G401 (cell line): ENCODE measurements at regions of chr14 and their contacts with region 1.

Region 1: GRCh38 chr14:24422261-24422660 is 7.2 kb downstream of the CBLN3 start:
- DNase-seq: no peak

Region 2: GRCh38 chr14:24146978-24147760 is 275.1 kb before region 1 on chr14 and contains the start of gene RNF31:
- in situ Hi-C with region 1: no loop called
- DNase-seq: peak; percentile 100
- total RNA-seq, gene RNF31: 51.9 and 89.7 TPM in 2 replicates

Region 3: DNA sequence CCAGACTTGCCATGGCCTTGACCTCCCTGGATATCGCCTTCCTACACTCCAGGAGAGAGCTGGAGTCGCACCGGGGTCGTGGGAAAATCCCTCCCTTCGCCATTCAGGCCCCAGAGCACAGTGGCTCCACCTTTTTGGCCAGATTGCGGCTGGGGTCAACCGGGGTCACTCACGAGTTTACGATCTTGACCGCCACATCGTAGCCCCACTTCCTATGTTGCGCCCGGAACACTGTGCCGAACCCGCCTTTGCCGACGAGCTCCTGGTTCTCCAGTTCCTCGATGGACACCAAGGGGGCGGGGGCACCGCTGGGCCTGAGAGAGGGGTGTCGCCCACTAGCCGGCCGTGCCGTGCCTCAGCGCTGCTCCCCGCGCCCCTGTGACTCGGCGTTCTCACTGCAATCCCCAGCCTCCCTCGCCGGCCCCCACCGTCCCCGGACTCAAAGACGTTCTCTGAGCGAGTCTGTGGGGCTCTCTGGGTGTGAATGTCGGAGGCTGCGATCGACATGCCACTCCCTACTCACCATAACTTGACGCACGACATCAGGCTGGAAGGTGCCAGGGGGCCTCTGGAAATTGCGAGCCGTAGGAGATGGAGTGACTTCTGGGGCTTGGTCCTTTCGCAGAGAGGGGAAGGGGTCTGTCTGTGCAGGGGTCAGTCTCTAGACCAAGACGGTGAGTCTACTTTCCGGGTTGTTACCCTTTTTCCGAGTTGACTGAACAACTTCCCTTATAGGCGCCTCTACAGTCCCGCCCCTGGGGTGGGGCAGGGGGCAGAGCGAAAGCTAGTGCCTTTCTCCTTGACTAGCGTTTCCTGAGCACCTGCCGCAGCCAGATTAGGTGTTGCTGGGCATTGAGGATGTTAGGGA is 82.7 kb before region 1 on chr14 and contains the start of gene RIPK3:
- in situ Hi-C with region 1: loop called (anchors 5 kb)
- DNase-seq: no peak
- total RNA-seq, gene RIPK3: not detected in 2 replicates

Region 4: DNA sequence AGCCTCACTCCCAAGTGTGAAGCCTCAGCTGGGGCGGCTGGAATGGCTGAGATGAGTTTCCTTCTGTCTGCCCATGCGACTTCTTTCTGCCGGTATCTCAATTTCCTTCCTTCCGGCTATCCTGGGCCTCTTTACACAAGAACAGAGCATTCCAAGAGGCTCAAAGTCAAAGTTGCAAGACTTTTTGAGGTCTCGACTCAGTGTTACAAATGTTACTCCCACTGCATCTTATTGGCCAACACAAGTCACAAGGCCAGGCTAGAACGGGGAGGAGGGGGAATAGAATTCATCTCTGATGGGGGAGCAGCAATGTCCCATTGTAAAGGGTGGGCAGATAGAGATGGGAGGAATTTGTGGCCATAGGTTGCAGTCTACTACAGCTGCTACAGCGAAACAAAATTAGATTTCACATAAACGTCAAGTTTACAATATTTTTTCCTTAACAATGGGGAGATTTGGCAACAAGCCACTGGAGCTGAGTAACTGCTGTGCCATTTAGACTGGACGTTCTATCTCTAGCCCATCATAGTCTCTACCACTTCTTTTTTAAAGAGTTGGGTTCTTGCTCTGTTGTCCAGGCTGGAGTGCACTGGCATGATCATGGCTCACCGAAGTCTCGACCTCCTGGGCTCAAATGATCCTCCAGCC is 32.9 kb before region 1 on chr14:
- in situ Hi-C with region 1: no loop called
- DNase-seq: no peak

Region 5: DNA sequence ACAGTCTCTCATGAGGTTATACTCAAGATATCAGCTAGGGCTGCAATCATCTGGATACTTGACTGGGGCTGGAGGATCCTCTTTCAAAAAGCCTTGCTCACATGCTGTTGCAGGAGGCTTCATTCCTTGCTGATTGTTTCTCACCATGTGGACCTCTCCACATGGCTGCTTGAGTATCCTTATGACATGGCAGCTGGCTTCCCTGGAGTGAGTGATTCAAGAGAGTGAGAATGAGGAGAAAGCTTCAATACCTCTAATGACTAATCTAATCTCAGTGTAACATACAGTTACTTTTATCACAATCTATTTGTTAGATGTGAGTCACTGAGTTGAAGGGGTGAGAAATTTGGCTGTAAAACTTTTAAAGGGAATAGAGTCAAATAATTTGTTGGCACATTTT is 34.7 kb after region 1 on chr14:
- in situ Hi-C with region 1: no loop called
- DNase-seq: no peak

Region 6: DNA sequence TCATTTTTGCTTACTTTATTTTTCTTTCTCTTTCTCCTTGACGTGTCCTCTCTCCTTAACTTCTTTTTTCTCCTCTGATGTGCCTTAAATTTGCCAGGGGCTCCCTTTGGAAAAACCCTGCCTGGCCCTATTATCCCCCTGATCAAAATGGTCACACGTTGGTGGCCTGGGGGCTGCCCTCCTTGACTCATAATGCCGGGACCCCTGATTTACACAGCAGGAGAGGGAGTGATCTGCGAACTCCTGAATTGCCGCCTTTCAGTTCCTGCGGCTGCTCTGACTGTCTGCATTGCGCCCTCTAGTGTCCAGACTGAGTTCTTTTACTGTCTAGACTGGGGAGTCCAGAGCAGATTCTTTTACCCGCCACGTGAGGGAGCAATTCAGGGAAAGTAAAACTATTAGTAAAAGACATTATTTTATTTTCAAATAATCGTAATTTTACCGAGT is 256.6 kb after region 1 on chr14:
- in situ Hi-C with region 1: no loop called
- DNase-seq: peak; percentile 53